Common myeloid progenitor, CD34-positive (primary cell): ENCODE measurements at regions of chr14 and their contacts with region 1.

Region 1: DNA sequence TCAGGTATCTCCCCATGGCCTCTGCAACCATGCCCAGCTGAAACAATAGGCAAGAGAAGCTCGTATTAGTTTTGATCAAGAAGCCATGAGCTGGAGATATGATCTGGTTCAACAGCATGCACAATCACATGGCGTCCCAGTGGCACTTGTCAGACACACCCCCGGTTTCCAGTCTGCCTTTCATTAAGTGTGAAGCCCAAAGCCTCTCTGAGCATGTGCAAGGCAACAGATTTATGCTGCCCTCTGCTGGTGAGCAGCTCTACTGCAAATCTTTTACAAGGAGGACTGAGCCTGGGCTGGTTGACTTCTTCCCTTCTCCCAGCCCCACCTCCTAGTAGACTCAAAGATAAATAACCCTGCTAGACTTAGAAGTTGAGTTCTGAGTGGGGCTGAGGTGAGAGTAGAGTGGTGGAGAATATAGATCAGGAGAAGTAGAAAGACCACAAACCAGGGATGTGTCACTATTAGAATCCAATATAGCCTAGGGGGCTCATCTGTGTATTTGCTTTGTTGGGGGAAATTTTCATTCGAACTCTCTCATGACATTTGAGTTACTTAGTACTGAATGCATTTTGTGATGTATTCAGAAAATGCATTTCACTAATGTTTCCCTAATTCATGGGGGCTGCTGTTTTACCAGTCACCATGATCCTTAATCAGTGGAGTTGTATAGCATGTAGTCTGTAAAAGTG is 53.7 kb upstream of the MBIP start:
- DNase-seq: peak; percentile 76 to 87 (median 83)
- H3K4me3 ChIP-seq: no peak overlapping the region
- H3K27ac ChIP-seq: no peak overlapping the region
- H3K4me1 ChIP-seq: no peaks in the 10 kb centered on the region
- H3K27me3 ChIP-seq: peaks cover 0 to 5% (median 3%) of the 10 kb centered on the region in 5 experiments

Region 2: DNA sequence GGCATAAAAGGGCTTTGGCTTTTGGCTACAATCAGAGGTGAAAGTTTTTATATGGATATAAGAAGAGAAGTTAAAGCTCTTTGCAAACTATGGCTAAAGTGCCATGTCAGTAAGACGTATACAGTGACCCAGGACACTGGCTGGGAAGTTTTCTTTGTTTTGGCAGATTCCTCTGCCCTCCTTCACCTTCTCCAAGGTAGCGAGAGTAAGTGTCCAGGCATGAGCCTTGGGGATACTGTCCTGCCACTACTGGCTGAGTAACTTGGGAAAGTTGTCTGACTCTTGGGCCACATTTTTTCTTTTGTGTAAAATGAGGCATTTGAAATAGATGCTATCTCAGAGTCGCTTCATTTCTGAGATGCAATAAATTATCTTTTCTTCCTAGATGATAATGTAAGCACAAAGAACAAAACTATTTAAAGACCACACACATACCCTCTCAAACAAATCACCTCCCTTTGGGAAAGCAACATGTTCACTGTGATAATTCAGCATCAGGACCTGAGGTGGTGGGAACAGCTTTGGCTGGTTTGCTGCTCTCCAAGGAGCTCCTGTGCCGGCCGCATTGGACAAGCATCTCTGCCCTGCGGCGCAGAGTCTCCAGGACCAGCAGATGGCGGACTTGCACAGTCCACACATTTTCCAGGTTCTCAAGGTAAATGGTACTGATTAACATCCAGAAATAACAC is 304.0 kb before region 1 on chr14:
- CTCF ChIA-PET with region 1: interaction called, 20 read pairs
- POLR2A ChIA-PET with region 1: no interaction called
- DNase-seq: peak; percentile 30 to 56 (median 54)
- H3K4me3 ChIP-seq: no peak overlapping the region
- H3K27ac ChIP-seq: no peak overlapping the region
- H3K4me1 ChIP-seq: no peaks in the 10 kb centered on the region
- H3K27me3 ChIP-seq: peaks cover 0 to 30% (median 3%) of the 10 kb centered on the region in 5 experiments

Region 3: GRCh38 chr14:36241183-36241582 is 132.9 kb before region 1 on chr14:
- CTCF ChIA-PET with region 1: interaction called, 17 read pairs
- POLR2A ChIA-PET with region 1: no interaction called
- DNase-seq: peak; percentile 6 to 28 (median 23)
- H3K4me3 ChIP-seq: no peak overlapping the region
- H3K27ac ChIP-seq: no peak overlapping the region
- H3K4me1 ChIP-seq: no peaks in the 10 kb centered on the region
- H3K27me3 ChIP-seq: peaks cover 0 to 6% (median 3%) of the 10 kb centered on the region in 5 experiments

Region 4: DNA sequence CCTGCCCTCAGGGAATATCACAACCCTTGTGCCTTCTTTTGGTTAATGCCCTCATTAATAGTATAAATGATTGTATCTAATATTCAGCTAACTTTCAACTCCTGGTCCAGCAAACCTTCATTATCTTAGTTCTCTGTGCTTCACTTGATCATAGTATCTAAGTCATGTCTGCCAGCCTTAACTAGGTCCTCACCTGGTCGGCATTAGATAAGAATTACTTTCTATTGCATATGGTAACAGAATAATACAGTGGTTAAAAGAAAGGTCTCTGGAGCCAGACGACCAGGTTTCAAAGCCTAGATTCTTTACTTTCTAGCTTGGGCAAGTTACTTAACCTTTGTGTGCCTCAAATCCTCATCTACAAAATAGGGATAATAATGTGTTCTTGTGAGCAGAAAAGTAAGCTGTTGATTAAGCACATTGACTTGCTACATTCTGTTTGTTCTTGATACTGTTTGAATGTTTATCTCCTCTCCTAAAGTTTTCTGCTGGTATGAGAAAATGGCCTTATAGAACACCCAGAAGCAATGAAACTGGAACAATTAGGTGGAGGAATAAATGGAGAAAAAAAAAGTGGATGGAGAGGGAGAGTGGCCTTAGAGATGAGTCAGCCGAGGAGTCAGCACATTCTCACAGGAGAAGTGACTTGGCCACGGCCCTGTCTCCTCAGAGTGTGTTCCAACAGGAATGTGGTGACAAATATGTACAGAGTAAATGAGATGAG is 622.2 kb after region 1 on chr14:
- CTCF ChIA-PET with region 1: no interaction called
- POLR2A ChIA-PET with region 1: no interaction called
- DNase-seq: no peak
- H3K4me3 ChIP-seq: no peak overlapping the region
- H3K27ac ChIP-seq: no peak overlapping the region
- H3K4me1 ChIP-seq: no peaks in the 10 kb centered on the region
- H3K27me3 ChIP-seq: no peaks in the 10 kb centered on the region